ENCODE measurements at regions of chr6 and their contacts with region 1.

Region 1: GRCh38 chr6:56902641-56903464 is 52.1 kb upstream of the BEND6 start:
- DNase-seq: peak; percentile 72
- ATAC-seq: no peak
- H3K4me3 ChIP-seq: no peak overlapping the region
- H3K27ac ChIP-seq: no peak overlapping the region
- H3K4me1 ChIP-seq: peaks cover 35% of the 10 kb centered on the region
- H3K27me3 ChIP-seq: no peaks in the 10 kb centered on the region
- CTCF ChIP-seq: peak; percentile 94

Region 2: DNA sequence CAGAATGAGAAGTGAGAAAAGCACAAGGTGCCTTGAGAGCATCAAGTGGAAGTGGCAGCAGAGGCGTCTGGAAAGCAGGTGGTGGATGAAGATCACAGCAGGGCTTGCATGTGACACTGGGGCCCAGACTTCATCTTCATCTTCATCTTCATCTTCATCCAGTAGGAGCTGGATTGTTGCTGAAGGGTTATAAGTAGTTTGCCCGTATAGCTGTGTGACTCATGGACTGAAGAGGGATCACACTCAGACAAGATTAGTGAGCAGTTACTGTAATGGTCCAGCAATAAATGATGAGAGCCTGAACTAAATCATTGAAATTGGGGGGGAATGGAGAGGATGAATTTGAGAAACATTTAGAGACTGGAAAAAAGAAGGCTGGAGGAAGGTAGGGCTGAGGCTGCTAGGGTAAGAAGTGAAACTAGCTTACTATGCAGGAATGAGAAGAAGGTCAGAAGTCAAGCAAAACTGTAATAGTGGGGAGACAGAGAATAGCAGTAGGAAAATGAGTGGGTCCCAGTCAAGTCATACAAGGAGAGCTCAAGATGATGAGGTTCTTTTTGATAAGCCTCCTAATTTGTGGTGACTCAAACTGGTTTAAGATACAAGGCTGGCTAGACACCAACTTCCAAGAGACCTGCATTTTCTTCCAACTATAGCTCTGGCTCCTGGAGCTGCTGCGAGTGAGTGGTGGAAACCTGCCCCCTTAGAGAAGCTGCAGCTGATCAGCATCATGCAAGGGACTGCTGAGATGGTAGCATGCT is 40.3 kb before region 1 on chr6:
- CTCF ChIA-PET with region 1: interaction called, 4 read pairs
- POLR2A ChIA-PET with region 1: no interaction called
- intact Hi-C with region 1: loop called (anchors 5 kb)
- DNase-seq: no peak
- ATAC-seq: no peak
- H3K4me3 ChIP-seq: no peak overlapping the region
- H3K27ac ChIP-seq: no peak overlapping the region
- H3K4me1 ChIP-seq: peaks cover 64% of the 10 kb centered on the region
- H3K27me3 ChIP-seq: no peaks in the 10 kb centered on the region
- CTCF ChIP-seq: no peak

Region 3: DNA sequence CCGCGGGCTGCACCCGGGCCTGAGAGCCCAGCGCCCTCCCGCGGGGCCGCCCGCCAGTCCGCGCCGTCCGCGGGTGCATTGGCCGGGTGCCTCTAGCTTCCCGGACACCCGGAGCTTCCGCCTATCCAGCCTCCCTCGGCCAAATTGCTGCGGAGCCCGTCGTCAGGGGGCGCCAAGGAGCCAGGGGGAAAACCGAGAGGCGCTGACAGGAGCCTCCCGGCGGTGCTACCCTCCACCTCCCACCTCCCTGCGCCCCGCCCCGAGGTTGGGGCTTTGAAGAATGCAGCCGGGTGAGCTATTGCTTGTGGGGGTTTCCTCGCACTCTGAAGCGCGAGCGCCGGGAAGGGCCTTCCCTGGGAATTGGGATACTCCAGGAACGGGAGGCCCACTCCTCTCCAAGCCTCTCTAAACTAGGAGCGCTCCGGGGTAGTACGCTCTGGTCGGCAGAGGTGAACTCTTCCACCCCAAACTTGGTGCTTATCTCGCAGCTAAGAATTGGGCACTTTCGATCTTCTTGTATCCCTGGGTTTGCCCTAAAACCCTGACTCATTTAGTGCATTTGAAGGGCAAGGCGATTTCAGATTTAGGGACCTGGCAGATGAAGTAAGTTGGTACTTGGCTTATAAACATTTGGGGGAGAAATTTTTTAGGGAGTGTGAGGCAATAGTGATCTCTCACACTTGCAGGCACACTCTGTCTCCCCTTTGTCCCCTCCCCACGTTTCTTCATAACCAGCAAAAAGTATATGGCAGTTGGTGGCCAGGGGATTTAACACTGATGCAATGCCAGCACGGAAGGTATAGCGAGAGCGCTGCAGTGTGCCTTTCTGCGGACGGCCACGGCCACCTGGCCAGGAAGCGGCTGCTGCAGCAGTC is 52.6 kb after region 1 on chr6:
- CTCF ChIA-PET with region 1: interaction called, 14 read pairs
- POLR2A ChIA-PET with region 1: interaction called, 3 read pairs
- intact Hi-C with region 1: loop called (anchors 1 kb)
- DNase-seq: peak; percentile 96
- ATAC-seq: peak; percentile 72
- H3K4me3 ChIP-seq: peak overlapping the region; percentile 77
- H3K27ac ChIP-seq: peak overlapping the region; percentile 31
- H3K4me1 ChIP-seq: peaks cover 58% of the 10 kb centered on the region
- H3K27me3 ChIP-seq: no peaks in the 10 kb centered on the region
- CTCF ChIP-seq: peak; percentile 83

Region 4: GRCh38 chr6:57021086-57021720 is 118.3 kb after region 1 on chr6:
- CTCF ChIA-PET with region 1: interaction called, 5 read pairs
- POLR2A ChIA-PET with region 1: interaction called, 5 read pairs
- intact Hi-C with region 1: loop called (anchors 1 kb)
- DNase-seq: peak; percentile 81
- ATAC-seq: peak; percentile 95
- H3K4me3 ChIP-seq: no peak overlapping the region
- H3K27ac ChIP-seq: no peak overlapping the region
- H3K4me1 ChIP-seq: no peaks in the 10 kb centered on the region
- H3K27me3 ChIP-seq: no peaks in the 10 kb centered on the region
- CTCF ChIP-seq: peak; percentile 70

Measured in PC-3 (cell line).